ENCODE measurements at regions of chr14 and their contacts with region 1.

Region 1: DNA sequence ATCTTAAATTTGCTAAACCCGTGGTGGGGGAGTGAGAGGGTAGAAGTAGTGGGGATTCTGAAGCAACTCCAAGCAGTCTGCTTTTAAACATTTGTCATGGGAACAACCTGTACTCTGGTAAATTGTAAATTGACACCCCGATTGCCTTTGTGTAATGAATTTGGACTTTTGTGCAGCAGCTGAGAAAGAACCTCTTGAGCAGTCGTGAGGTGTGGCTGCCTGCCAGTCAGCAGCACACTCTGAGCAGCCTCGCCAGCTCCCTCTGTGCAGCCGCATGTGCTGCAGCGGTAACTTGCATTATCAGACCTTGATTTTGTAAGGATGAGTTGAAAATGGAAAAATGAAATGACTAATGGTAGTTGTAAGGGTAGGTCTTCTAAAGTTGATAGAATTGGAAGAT is 74.3 kb downstream of the SUSD6 start:
- DNase-seq: peak; percentile 91
- H3K4me3 ChIP-seq: no peak overlapping the region
- H3K27ac ChIP-seq: peak overlapping the region; percentile 35 to 72 (median 57)
- H3K4me1 ChIP-seq: peaks cover 0 to 66% (median 58%) of the 10 kb centered on the region in 4 donors
- H3K27me3 ChIP-seq: no peaks in the 10 kb centered on the region
- CTCF ChIP-seq: no peak
- EP300 ChIP-seq: no peak
- POLR2A ChIP-seq: no peak

Region 2: GRCh38 chr14:69611201-69612011 is 74.3 kb before region 1 on chr14 and contains the start of gene SUSD6:
- intact Hi-C with region 1: no loop called
- DNase-seq: peak; percentile 96
- H3K4me3 ChIP-seq: peak within 1 kb of the TSS; percentile 82 to 88 (median 86)
- H3K27ac ChIP-seq: peak within 1 kb of the TSS; percentile 97 to 100 (median 98)
- H3K4me1 ChIP-seq: peaks cover 0 to 50% (median 47%) of the 10 kb centered on the region in 4 donors
- H3K27me3 ChIP-seq: no peaks in the 10 kb centered on the region
- CTCF ChIP-seq: no peak
- EP300 ChIP-seq: no peak
- POLR2A ChIP-seq: peak; percentile 44 to 46
- total RNA-seq, gene SUSD6: 13.5 to 62.0 (median 18.6) TPM

Region 3: DNA sequence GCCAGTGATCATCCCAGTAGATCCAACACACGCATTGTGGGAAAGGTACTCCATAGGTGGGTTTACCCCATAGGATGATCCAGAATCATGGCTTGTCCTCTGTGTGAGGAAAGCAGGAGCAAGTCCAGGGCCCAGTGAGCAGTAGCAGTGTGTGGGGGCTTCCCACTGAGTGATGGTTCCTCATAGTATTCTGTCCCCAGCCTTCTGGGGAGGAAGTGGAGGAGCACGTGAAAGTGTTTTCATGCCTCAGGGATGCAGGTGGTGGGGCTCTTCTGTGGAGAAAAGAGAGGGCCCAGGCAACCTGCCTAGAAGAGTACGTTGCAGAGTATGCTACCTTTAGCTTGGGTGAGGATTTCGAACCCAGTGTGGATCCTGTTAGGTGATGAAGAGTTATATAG is 17.8 kb before region 1 on chr14:
- intact Hi-C with region 1: loop called (anchors 2 kb)
- DNase-seq: no peak
- H3K4me3 ChIP-seq: no peak overlapping the region
- H3K27ac ChIP-seq: peak overlapping the region in 3 of 4 donors; percentile 35 to 76 (median 36)
- H3K4me1 ChIP-seq: peaks cover 0 to 96% (median 85%) of the 10 kb centered on the region in 4 donors
- H3K27me3 ChIP-seq: no peaks in the 10 kb centered on the region
- CTCF ChIP-seq: no peak
- EP300 ChIP-seq: no peak
- POLR2A ChIP-seq: no peak

Region 4: GRCh38 chr14:69701857-69702256 is 16.1 kb after region 1 on chr14:
- intact Hi-C with region 1: loop called (anchors 2 kb)
- DNase-seq: no peak
- H3K4me3 ChIP-seq: no peak overlapping the region
- H3K27ac ChIP-seq: no peak overlapping the region
- H3K4me1 ChIP-seq: peaks cover 0 to 34% (median 31%) of the 10 kb centered on the region in 4 donors
- H3K27me3 ChIP-seq: no peaks in the 10 kb centered on the region
- CTCF ChIP-seq: no peak
- EP300 ChIP-seq: no peak
- POLR2A ChIP-seq: no peak